AG04449 (cell line): ENCODE measurements at regions of chr3 and their contacts with region 1.

Region 1: DNA sequence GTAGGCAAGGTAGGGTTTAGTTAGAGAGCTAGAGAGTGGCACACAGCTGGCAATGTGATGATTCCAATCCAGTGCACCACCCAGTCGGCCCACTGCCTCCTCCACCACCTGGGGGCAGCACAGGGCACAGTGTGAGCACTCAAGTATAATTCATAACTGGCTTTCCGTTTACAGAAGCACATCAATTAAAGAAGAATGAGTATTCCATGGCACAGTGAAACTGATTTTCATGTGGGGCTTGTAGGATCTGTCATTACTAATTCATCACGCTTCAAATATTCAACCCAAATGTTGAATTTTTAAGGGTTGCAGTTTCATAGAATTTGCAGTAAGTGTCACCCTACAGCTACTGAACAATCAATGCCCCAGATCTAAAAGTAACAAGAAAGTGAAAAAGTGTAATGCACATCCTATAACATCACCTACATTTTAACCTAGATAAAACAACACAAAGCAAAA is 149.9 kb downstream of the IGSF11 start:
- DNase-seq: no peak
- H3K4me3 ChIP-seq: no peak overlapping the region
- CTCF ChIP-seq: peak; percentile 95

Region 2: GRCh38 chr3:118850687-118851086 is 34.1 kb before region 1 on chr3:
- CTCF ChIA-PET with region 1: interaction called, 11 read pairs
- POLR2A ChIA-PET with region 1: no interaction called
- DNase-seq: no peak
- H3K4me3 ChIP-seq: no peak overlapping the region
- CTCF ChIP-seq: no peak

Region 3: DNA sequence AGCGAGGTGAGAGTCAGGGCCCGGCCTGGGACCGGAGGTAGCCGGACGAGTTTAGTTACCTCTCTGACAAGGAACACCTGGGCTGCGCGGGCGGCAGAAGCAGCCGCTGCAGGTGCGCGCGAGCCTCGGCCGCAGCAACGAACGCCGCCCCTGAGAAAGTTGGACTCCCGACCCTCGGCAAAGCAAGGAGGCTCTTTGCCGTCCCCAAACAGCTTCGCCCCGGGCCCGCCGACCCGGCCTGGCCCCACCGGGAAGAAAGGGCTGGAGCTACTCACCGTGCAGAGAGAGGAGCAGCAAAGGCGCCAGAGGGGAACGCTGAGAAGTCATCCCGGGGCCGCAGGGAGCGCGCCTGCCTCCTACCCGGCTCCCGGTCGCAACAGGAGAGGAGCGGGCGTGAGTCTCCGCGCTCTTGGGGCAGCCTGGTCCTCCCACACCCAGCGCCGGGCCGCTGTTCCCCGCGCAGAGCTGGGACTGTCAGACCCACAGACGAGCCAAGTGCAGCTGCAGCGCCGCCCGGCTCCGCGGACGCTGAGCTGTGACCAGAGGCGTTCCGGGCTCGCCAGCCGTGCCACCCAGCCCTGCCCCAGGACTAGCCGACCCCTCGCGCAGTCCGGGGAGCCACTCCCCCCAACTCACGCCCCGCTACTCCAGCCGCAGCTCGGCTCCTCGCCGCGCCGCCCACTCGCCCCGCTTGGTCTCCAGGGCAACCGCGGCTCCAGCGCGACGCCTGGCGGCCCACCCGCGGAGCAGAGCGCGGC is 149.7 kb after region 1 on chr3 and contains the start of gene IGSF11:
- CTCF ChIA-PET with region 1: interaction called, 65 read pairs
- POLR2A ChIA-PET with region 1: no interaction called
- DNase-seq: no peak
- H3K4me3 ChIP-seq: peak within 1 kb of the TSS; percentile 54
- CTCF ChIP-seq: peak; percentile 25

Region 4: DNA sequence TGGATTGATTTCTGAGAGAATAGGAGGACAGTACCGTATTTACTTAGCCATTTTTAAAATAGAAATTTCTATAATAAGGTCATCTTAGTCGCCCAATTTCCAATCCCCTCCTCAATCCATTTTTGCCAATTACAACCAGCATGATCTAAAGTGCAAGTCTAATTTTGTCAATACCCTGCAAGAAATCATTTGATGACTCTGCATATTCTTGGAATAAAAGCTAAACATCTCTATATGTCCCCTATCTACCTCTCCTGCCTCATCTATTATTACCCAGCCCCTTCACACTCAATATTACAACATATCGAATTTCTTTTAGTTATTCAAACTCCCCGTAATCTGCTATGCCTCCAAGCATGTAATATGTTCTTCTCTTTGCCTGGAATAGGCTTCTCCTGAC is 219.3 kb after region 1 on chr3:
- CTCF ChIA-PET with region 1: interaction called, 310 read pairs
- POLR2A ChIA-PET with region 1: no interaction called
- DNase-seq: no peak
- H3K4me3 ChIP-seq: no peak overlapping the region
- CTCF ChIP-seq: no peak

Region 5: GRCh38 chr3:119240591-119241434 is 356.0 kb after region 1 on chr3 and contains the start of gene B4GALT4:
- CTCF ChIA-PET with region 1: interaction called, 45 read pairs
- POLR2A ChIA-PET with region 1: no interaction called
- DNase-seq: no peak
- H3K4me3 ChIP-seq: peak within 1 kb of the TSS; percentile 79
- CTCF ChIP-seq: no peak